Left cardiac atrium (tissue), 4 donors: ENCODE measurements at regions of chr18 and their contacts with region 1.

Region 1: GRCh38 chr18:47772374-47773248 is 157.8 kb downstream of the SMAD2 start:
- DNase-seq: no peak
- ATAC-seq: peak; percentile 65 to 73

Region 2: GRCh38 chr18:46433121-46433826 is 1339.3 kb before region 1 on chr18:
- intact Hi-C with region 1: no loop called
- DNase-seq: no peak
- ATAC-seq: peak in 1 of 2 donors; percentile 26

Region 3: GRCh38 chr18:47501946-47502345 is 270.7 kb before region 1 on chr18:
- intact Hi-C with region 1: no loop called
- DNase-seq: no peak
- ATAC-seq: no peak

Region 4: DNA sequence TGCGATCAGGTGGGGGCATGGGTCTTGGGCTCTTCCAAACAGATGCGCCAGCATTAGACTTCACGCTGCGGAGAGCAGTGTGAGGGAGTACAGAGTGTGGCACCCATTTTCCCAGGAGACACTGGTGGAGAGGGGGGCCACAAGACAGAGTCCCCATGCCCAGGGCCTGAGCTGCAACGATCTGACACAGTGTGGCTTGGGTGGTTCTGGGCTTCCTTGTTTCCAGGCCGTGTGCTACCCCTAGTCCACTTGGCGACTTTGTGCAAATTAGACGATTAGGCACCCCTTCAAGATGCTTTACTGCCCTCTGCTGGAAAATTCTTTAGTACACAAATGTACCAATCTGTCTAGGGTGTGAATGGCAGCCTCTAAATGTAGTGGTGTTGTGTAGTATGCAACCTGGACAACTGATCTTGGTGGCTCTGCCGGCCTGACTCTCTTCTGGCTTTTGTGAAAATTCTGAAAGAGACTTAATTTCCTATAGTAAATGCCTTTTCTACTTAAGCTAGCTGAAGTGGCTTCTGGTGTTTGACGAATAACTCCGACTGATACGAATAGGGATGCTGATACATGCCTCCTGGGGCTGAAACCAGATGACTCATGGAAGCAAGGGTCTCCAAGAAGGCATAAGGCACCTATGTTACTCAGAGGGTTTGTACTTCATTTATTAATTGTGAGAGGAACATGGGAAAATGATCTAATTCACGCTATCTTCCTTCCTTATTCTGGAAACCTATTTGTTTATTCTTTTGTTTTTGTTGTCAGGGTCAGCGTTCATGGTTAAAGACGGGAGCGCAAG is 250.1 kb after region 1 on chr18:
- intact Hi-C with region 1: loop called (anchors 1 to 5 kb)
- DNase-seq: no peak
- ATAC-seq: peak; percentile 59 to 61

Region 5: DNA sequence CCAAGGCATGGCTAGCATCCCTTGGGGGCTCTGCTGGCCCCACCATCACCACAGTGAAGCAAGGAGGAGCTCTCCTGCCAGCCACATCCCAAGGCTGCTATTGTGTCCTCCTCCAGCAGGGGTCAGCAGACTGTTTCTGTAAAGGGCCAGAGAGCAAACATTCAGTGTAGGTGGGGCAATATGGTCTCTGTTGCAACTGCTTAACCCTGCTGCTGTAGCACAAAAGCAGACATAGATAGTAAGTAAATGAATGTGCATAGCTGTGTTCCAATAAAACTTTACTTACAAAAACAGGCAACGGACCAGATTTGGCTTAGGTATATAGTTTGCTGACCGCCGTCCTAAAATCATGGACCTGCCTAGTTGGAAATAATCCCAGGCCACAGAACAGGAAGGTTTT is 672.9 kb after region 1 on chr18:
- intact Hi-C with region 1: loop called in 1 of 2 experiments (anchors 10 kb)
- DNase-seq: peak; percentile 74
- ATAC-seq: peak; percentile 36 to 77